PC-3 (cell line): ENCODE measurements at regions of chr22 and their contacts with region 1.

Region 1: GRCh38 chr22:19178656-19179496 is at the start of gene SLC25A1:
- DNase-seq: peak; percentile 85
- ATAC-seq: peak; percentile 82
- H3K4me3 ChIP-seq: peak within 1 kb of the TSS; percentile 88
- H3K27ac ChIP-seq: peak within 1 kb of the TSS; percentile 42
- H3K4me1 ChIP-seq: peaks cover under 1% of the 10 kb centered on the region; the same call in 1 of the 2 replicates
- H3K27me3 ChIP-seq: no peaks in the 10 kb centered on the region
- CTCF ChIP-seq: no peak
- total RNA-seq, gene SLC25A1: 81.6 and 91.7 TPM in 2 replicates

Region 2: GRCh38 chr22:18905540-18906409 is 273.1 kb before region 1 on chr22 and contains the start of gene DGCR6:
- CTCF ChIA-PET with region 1: no interaction called
- POLR2A ChIA-PET with region 1: no interaction called
- intact Hi-C with region 1: no loop called
- DNase-seq: no peak
- ATAC-seq: peak; percentile 98
- H3K4me3 ChIP-seq: no peak within 1 kb of the TSS
- H3K27ac ChIP-seq: no peak within 1 kb of the TSS
- H3K4me1 ChIP-seq: no peaks in the 10 kb centered on the region
- H3K27me3 ChIP-seq: no peaks in the 10 kb centered on the region
- CTCF ChIP-seq: no peak
- total RNA-seq, gene DGCR6: 0.86 and 3.4 TPM in 2 replicates

Region 3: DNA sequence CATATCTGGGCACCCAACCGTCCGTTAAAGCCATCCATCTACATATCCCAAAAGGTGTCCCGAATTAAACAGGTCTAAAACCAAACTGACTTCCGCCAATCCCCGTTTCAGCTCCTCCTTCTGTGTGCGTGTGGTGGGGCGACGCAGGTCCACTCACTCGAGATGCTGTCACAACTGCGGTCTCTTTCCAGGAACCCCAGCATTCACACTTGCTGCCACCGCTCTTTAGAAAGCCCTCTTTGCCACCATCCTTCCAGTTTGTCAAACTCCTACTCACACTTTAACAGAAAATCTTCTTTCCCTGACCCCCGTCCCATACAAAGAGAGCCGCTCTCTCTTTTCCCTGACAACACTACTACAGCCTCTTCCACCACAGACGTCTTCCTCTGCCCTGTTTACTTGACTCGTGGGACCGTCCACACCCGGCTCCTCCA is 34.9 kb before region 1 on chr22:
- CTCF ChIA-PET with region 1: interaction called, 3 read pairs
- POLR2A ChIA-PET with region 1: interaction called, 6 read pairs
- intact Hi-C with region 1: loop called (anchors 2 kb)
- DNase-seq: no peak
- ATAC-seq: peak; percentile 39
- H3K4me3 ChIP-seq: peak overlapping the region; percentile 100
- H3K27ac ChIP-seq: 0 out of 2 replicates have a peak overlapping the region, but pooled peaks have one; percentile 9
- H3K4me1 ChIP-seq: no peaks in the 10 kb centered on the region
- H3K27me3 ChIP-seq: no peaks in the 10 kb centered on the region
- CTCF ChIP-seq: no peak

Region 4: DNA sequence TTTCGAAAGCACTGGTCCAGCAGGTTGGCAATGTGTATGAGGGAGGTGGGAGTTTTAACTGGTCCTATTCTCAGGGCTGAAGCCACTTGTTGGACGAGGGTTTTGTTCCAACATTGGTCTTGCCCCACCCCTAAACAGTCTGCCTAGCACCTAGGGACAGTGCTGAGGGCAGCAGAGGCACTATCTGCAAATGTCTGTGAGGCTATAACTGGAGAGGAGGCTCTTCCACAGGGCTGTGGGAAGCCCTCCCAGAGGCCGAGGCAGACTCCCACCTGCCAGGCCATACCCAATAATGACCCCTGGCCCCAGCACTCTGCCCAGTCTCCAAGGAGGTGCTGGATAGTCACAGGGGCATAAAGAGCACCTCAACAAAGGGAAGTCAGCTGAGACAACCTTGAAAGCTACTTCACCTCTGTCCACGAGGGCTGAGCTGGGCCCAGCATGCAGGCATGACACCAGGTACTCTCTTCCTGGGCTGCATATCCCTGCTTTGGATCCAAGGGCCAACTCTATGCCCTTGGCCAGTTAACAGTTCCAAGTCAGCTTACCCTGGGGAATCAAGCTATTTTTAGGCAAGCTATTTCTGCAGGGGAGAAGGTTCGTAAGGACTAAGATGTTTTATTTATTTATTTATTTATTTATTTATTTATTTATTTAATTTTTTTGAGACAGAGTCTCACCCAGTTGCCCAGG is 39.8 kb after region 1 on chr22:
- CTCF ChIA-PET with region 1: no interaction called
- POLR2A ChIA-PET with region 1: no interaction called
- intact Hi-C with region 1: loop called (anchors 2 kb)
- DNase-seq: no peak
- ATAC-seq: no peak; the same call in 1 of the 2 replicates
- H3K4me3 ChIP-seq: no peak overlapping the region
- H3K27ac ChIP-seq: no peak overlapping the region
- H3K4me1 ChIP-seq: no peaks in the 10 kb centered on the region
- H3K27me3 ChIP-seq: no peaks in the 10 kb centered on the region
- CTCF ChIP-seq: no peak

Region 5: DNA sequence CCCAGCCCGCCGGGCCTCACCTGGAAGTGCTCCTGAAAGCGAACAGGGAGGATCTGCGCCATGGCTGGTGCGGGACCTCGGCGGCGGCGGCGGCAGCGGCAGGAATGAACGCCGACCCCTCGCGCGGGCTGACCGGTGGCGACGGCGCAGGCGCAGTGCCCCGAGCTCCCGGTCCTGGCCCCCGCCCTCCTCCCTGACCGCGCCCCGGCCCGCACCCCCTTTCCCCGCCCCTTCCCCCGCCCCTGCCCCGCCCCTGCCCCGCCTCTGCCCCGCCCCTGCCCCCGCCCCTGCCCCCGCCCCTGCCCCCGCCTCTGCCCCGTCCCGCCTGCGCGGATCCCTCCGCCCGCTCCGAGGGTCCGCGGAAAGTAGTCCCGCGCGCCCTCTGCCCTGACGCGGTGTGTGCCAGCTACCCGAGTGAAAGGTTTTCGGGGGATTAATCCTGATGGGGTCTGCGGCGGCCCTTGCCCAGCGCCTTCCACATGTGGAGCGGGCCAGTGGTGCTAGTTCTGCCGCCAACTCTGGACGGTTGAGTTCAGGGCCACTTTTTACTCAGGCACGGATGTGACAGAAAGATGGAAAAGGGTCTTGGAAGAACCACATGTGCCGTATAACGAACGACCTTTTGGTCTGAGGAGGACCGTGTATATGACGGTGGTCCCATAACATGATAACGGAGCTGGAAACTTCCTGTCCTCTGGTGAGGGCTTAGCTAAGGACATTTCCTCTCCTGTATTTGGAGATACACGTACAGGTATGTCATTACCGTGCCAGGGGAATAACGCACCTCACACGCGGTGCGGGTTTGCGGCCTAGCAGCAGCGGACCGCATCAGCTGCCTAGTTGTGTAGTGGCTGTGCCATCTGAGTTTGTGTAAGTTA is 112.9 kb after region 1 on chr22 and contains the start of gene CLTCL1:
- CTCF ChIA-PET with region 1: interaction called, 7 read pairs
- POLR2A ChIA-PET with region 1: no interaction called
- intact Hi-C with region 1: loop called (anchors 2 kb)
- DNase-seq: peak; percentile 48
- ATAC-seq: peak; percentile 33
- H3K4me3 ChIP-seq: peak within 1 kb of the TSS; percentile 90
- H3K27ac ChIP-seq: no peak within 1 kb of the TSS; the same call in 1 of the 2 replicates
- H3K4me1 ChIP-seq: peaks cover 46% of the 10 kb centered on the region
- H3K27me3 ChIP-seq: no peaks in the 10 kb centered on the region
- CTCF ChIP-seq: no peak
- total RNA-seq, gene CLTCL1: 4.5 and 5.5 TPM in 2 replicates